ENCODE measurements at regions of chr6 and their contacts with region 1.

Region 1: GRCh38 chr6:35731736-35732532 is 4.9 kb upstream of the ARMC12 start:
- DNase-seq: peak; percentile 91
- H3K4me3 Mint-ChIP-seq: peak overlapping the region; percentile 85
- H3K27ac Mint-ChIP-seq: peak overlapping the region; percentile 81
- H3K4me1 Mint-ChIP-seq: peaks cover 63% of the 10 kb centered on the region
- H3K27me3 Mint-ChIP-seq: no peaks in the 10 kb centered on the region

Region 2: DNA sequence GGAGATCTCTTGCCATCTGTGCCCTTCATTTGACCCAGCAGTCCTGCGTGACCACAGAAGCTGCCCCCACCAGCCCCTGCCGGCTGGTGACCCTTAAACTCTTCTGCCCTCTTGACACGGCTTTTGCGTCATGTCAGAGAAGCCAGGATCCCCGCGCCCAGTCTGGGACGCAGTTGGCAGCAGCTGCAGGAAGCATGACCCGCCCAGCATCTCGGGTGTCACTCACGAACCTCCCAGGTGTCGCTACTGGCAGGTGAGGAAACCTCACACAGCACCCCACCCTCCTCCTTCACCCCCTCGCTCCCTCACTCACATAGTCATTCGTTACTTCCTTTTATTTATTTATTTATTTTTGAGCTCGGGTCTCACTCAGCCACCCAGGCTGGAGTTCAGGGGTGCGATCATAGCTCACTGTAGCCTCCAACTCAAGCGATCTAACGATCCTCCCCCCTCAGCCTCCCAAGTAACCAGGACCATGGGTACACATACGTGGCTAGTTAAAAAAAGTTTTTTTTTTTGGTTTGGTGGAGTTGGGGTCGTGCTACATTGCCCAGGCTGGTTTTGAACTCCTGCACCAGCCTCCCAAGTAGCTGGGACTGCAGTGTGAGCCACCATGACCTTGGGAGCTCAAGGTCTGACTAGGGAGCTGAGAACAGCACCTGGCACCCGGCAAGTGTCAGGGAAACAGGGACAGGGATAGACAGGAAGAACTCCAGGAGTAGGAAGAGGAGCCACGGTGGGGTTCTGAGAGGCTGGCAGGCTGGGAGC is 1161.7 kb before region 1 on chr6:
- intact Hi-C with region 1: no loop called
- DNase-seq: no peak
- H3K4me3 Mint-ChIP-seq: no peak overlapping the region
- H3K27ac Mint-ChIP-seq: no peak overlapping the region
- H3K4me1 Mint-ChIP-seq: no peaks in the 10 kb centered on the region
- H3K27me3 Mint-ChIP-seq: peaks cover 2% of the 10 kb centered on the region

Region 3: GRCh38 chr6:35058865-35059522 is 672.9 kb before region 1 on chr6:
- intact Hi-C with region 1: no loop called
- DNase-seq: no peak
- H3K4me3 Mint-ChIP-seq: no peak overlapping the region
- H3K27ac Mint-ChIP-seq: no peak overlapping the region
- H3K4me1 Mint-ChIP-seq: peaks cover 17% of the 10 kb centered on the region
- H3K27me3 Mint-ChIP-seq: no peaks in the 10 kb centered on the region

Region 4: DNA sequence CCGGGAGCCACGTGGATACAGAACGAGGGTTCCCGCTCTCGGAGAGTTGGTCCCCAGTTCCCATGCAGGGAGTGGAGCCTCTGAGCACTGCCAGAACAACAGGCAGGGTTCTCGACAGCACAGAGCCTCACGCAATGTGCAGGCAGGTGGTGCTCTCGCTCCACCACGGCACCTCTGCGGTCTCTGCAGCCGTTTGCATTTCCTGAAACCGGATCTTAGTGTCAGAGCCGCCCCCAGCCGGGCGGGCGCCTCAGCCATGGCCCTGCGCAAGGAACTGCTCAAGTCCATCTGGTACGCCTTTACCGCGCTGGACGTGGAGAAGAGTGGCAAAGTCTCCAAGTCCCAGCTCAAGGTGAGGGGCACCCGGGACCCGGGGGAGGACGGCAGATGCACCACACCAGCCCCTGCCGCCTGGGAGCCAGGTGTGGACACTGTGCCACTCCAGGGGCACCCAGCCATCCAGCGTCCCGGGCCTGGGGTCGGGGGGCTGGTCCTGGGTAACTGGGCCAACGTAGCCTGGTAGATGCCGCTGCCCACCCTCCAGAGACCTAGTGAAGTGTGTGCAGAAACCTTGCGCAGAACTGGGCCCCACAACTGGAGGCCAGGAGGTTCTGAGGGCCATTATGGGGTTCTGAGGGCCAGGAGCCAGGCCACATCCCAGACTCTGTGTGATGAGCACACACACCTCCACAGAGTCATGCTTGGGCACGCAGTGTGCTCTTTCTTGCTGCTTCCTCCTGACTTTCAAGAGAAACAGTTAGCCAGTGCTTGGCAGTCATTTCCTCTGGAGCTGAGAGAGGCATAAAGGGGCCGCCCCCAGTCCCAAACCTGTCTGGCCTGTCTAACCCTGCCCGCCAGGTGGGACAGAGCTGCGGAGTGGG is 434.1 kb before region 1 on chr6 and contains the start of gene DEF6:
- intact Hi-C with region 1: loop called (anchors 2 kb)
- DNase-seq: peak; percentile 85
- H3K4me3 Mint-ChIP-seq: peak within 1 kb of the TSS; percentile 88
- H3K27ac Mint-ChIP-seq: peak within 1 kb of the TSS; percentile 98
- H3K4me1 Mint-ChIP-seq: peaks cover 48% of the 10 kb centered on the region
- H3K27me3 Mint-ChIP-seq: no peaks in the 10 kb centered on the region
- total RNA-seq, gene DEF6: 123 and 125 TPM in 2 replicates

Region 5: DNA sequence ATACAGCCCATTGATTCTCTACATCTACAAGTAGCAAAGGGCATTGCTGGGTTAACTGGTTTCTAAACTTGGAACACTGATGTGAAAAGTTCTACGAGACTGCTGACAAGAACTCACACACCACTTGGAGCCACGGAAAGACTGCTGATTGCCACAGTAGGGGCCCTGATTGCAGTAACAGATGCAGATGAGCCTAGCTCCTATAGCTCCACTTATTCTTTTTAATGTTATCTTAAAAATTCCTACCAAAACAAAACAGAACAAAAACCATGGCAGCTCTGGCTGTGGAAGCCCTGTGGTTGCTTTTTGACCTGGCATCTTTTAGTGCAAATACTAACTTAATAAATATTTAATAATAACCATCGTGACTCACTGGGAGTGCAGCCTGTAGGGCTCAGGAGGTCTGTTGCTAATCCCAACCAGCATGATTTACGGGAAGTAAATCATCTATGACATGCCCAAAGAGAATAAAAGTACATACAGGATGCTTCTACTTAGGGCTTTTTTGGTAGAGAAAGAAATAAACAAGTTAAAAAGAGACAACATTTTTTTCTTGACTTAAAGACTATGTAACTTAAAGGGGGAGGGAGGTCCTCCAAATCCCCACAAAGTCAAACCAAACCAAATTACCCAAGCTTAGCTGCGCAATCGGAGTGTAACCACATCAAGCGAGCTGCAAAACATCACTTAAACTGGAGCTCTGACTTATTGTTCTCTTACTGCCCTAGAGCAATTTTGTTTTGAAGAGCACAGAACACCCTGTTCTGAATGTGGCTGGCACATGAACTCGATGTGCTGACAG is 130.4 kb before region 1 on chr6:
- intact Hi-C with region 1: loop called (anchors 5 kb)
- DNase-seq: peak; percentile 57
- H3K4me3 Mint-ChIP-seq: peak overlapping the region; percentile 80
- H3K27ac Mint-ChIP-seq: peak overlapping the region; percentile 89
- H3K4me1 Mint-ChIP-seq: peaks cover 62% of the 10 kb centered on the region
- H3K27me3 Mint-ChIP-seq: no peaks in the 10 kb centered on the region

Region 6: DNA sequence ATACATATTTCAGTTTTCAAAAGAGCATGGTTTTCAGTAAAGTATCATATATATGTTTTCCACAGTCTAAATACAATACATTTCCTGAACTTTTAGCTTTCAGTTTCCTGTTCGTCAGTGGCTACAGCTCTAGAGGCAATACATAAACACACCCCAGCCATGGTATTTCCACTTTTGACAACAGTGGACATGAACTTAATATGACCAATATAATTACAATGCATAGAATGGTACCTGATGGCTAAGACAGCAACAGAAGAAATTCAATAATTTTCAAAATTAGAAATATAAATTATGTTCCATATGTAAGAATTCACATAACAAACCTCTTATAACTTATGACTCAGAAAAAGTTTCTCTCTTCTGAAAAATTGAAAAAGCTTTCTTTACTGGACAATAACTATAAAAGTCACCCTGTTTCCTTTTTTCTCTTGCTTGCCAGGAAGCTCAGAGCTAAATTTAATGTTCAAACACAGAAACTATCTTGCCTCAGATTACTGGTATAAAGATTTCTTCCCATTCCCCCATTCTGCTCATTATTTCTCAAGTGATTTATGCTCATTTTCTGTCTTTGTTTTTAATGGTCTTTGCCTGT is 62.4 kb before region 1 on chr6:
- intact Hi-C with region 1: loop called (anchors 2 kb)
- DNase-seq: no peak
- H3K4me3 Mint-ChIP-seq: peak overlapping the region; percentile 46
- H3K27ac Mint-ChIP-seq: peak overlapping the region; percentile 82
- H3K4me1 Mint-ChIP-seq: peaks cover 46% of the 10 kb centered on the region
- H3K27me3 Mint-ChIP-seq: no peaks in the 10 kb centered on the region

Region 7: DNA sequence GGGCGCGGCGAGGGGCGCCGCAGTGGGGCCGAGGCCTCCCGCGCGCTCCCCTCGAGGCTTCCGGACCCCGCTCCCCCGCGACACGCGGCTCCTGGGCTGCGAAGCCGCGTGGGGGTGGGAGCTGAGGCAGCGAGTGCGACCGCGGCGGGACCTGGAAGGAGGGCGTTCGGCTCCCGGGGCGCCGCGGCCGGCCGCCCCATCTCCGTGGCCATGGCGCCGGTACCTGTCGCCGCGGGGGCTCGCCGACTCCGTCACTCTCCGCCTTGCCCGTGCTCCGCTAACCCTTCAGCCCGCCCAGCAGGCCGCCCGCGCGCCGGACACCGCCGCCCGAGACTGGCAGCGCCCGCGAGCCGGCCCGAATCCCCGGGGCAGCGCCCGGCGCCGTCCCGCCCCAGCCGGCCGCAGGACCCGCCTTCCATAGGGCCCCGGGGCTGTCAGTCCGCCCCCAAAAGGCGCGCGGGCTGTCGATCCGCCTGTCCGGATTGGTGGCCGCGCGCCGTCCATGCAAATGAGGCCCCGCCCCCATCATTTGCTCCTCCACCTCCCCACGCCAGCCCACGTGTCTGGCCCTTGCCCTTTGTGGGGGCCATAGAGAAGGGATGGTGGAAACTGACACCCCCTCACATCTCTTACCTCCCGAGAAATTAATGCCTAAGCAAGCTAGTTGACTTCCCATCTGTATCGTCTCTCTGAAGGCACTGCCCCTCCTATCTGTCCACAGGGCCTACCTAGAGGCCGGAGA is 43.2 kb before region 1 on chr6 and contains the start of gene FKBP5:
- intact Hi-C with region 1: loop called (anchors 1 kb)
- DNase-seq: peak; percentile 87
- H3K4me3 Mint-ChIP-seq: peak within 1 kb of the TSS; percentile 97
- H3K27ac Mint-ChIP-seq: peak within 1 kb of the TSS; percentile 95
- H3K4me1 Mint-ChIP-seq: peaks cover 24% of the 10 kb centered on the region
- H3K27me3 Mint-ChIP-seq: peaks cover 2% of the 10 kb centered on the region
- total RNA-seq, gene FKBP5: 60.9 and 62.4 TPM in 2 replicates

Region 8: GRCh38 chr6:35719830-35720733 is 11.9 kb before region 1 on chr6:
- intact Hi-C with region 1: loop called (anchors 1 kb)
- DNase-seq: no peak
- H3K4me3 Mint-ChIP-seq: peak overlapping the region; percentile 55
- H3K27ac Mint-ChIP-seq: peak overlapping the region; percentile 86
- H3K4me1 Mint-ChIP-seq: peaks cover 62% of the 10 kb centered on the region
- H3K27me3 Mint-ChIP-seq: peaks cover 3% of the 10 kb centered on the region

Region 9: GRCh38 chr6:37021356-37022129 is 1289.6 kb after region 1 on chr6:
- intact Hi-C with region 1: no loop called
- DNase-seq: peak; percentile 74
- H3K4me3 Mint-ChIP-seq: no peak overlapping the region
- H3K27ac Mint-ChIP-seq: peak overlapping the region; percentile 70
- H3K4me1 Mint-ChIP-seq: peaks cover 87% of the 10 kb centered on the region
- H3K27me3 Mint-ChIP-seq: no peaks in the 10 kb centered on the region